ENCODE measurements at regions of chr7 and their contacts with region 1.

Region 1: DNA sequence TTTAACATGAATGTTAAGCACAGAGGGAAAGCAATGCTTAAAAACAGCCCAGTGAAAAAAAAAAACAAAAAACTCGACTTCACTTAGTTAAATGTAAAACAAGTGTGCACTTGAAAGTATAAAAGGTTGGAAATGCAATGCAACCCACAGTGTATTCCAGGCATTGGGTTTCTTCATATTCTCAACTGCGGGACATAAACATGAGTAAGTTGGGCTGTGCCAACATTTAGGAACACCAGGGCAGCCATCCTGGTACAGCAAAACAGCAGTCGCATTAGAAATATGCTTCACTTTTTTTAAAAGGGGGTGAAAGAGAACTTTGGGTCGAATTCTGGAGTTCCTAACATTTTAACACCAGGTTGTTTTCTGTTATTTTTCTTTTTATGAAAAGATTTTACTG is 937 bp downstream of the STEAP1 start:
- DNase-seq: no peak
- H3K4me3 ChIP-seq: peak overlapping the region in 2 of 3 experiments; percentile 5 to 66
- H3K27ac ChIP-seq: no peak overlapping the region
- H3K4me1 ChIP-seq: peaks cover 18% of the 10 kb centered on the region
- H3K27me3 ChIP-seq: no peaks in the 10 kb centered on the region
- CTCF ChIP-seq: no peak

Region 2: DNA sequence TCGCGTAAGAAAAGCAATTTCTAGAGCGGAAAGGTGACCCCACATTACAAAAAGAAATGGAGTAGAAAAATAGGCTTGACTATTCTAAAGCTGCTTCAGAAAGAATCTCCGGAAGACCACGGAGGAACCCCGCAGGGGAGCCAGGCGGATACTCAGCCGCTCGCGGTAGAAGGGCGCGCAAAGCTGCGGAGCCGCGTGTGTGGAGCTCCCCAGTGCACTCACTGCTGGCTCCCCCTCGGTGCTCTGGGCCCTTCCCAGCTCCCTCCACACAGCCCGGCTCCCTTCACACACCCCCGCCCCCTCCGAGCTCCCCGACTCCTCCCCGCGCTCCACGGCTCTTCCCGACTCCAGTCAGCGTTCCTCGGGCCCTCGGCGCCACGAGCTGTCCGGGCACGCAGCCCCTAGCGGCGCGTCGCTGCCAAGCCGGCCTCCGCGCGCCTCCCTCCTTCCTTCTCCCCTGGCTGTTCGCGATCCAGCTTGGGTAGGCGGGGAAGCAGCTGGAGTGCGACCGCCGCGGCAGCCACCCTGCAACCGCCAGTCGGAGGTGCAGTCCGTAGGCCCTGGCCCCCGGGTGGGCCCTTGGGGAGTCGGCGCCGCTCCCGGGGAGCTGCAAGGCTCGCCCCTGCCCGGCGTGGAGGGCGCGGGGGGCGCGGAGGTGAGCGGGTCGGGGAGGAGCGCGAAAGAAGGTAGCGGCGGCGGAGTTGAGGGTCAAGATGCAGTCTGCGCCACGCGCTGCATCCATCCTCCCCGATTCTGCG is 56.4 kb after region 1 on chr7 and contains the start of gene STEAP2:
- CTCF ChIA-PET with region 1: interaction called, 16 read pairs
- dilution Hi-C with region 1: no loop called
- in situ Hi-C with region 1: no loop called
- intact Hi-C with region 1: loop called (anchors 1 kb)
- DNase-seq: peak; percentile 88
- H3K4me3 ChIP-seq: peak within 1 kb of the TSS; percentile 55 to 77 (median 75)
- H3K27ac ChIP-seq: peak within 1 kb of the TSS; percentile 51
- H3K4me1 ChIP-seq: peaks cover 13% of the 10 kb centered on the region
- H3K27me3 ChIP-seq: no peaks in the 10 kb centered on the region
- CTCF ChIP-seq: peak; percentile 26 to 74
- total RNA-seq, gene STEAP2: 9.2 to 10.9 TPM

Region 3: GRCh38 chr7:90244909-90245851 is 90.0 kb after region 1 on chr7 and contains the start of gene CFAP69:
- CTCF ChIA-PET with region 1: no interaction called
- dilution Hi-C with region 1: no loop called
- in situ Hi-C with region 1: loop called in 1 of 2 experiments (anchors 25 kb)
- intact Hi-C with region 1: loop called (anchors 1 kb)
- DNase-seq: peak; percentile 81
- H3K4me3 ChIP-seq: peak within 1 kb of the TSS; percentile 79 to 95 (median 83)
- H3K27ac ChIP-seq: peak within 1 kb of the TSS; percentile 69
- H3K4me1 ChIP-seq: peaks cover 16% of the 10 kb centered on the region
- H3K27me3 ChIP-seq: no peaks in the 10 kb centered on the region
- CTCF ChIP-seq: peak in 1 of 2 donors; percentile 53
- total RNA-seq, gene CFAP69: 1.7 to 5.0 TPM

Region 4: DNA sequence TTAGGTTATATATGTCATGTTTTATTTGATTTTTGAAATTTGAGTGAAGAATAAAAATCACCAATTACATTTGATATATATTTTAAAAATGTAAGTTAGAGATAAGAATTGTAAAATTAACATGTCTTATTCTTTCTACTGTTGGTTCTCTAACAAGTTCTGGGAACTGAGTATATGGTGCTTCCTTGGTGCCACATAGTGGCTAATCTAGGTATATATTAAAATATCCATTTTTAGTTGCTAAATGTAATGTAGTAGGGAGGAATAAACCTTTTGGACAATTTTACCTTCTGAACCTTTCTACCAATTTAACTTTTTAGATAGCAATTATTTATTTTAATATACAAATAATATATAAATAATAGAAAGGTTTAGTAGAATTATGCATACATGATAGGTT is 107.2 kb after region 1 on chr7:
- CTCF ChIA-PET with region 1: no interaction called
- dilution Hi-C with region 1: no loop called
- in situ Hi-C with region 1: loop called (anchors 5 to 25 kb)
- intact Hi-C with region 1: loop called (anchors 1 kb)
- DNase-seq: peak; percentile 21
- H3K4me3 ChIP-seq: no peak overlapping the region
- H3K27ac ChIP-seq: no peak overlapping the region
- H3K4me1 ChIP-seq: no peaks in the 10 kb centered on the region
- H3K27me3 ChIP-seq: no peaks in the 10 kb centered on the region
- CTCF ChIP-seq: peak; percentile 32 to 54

Region 5: DNA sequence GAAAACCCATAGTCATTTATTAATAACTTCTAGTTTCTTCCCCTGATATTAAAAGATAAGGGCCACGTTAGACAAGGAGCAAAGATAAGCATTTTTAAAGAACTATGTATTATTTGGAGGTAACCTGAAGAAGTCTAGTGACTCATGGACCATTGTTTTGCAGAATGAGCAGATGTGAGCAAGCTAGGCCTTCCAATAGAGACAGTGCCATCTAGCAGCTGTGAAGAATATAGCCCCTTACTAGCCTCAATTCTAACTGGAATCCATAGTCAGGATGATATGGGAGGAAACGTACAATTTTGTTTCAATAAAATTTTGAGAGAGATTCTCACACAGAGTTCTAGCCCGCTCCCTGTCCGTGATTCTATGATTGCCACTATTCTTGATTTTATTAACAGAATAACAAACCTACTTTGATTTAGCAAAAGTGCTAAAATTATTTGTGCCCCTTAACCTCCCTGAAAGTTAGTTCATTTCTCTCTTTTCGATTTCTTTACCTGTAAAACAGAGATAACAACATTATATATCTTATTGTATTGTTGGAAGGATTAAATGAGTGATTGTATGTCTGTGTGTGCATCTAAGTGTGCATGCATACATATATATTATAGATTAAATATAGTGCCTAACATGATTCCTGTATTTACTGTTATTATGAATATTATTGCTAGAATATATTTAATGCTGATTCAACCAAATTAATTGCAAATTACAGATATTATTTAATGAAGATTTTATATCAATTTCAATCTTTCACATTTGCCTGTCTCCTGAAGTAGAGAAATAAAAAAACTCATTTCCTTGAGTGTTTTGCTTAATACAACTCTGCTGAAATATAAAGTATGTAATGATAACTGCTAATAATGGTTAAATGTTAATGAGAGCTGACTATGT is 143.2 kb after region 1 on chr7:
- CTCF ChIA-PET with region 1: no interaction called
- dilution Hi-C with region 1: no loop called
- in situ Hi-C with region 1: no loop called
- intact Hi-C with region 1: loop called (anchors 1 kb)
- DNase-seq: peak; percentile 61
- H3K4me3 ChIP-seq: no peak overlapping the region
- H3K27ac ChIP-seq: no peak overlapping the region
- H3K4me1 ChIP-seq: no peaks in the 10 kb centered on the region
- H3K27me3 ChIP-seq: no peaks in the 10 kb centered on the region
- CTCF ChIP-seq: peak; percentile 71 to 81

Region 6: DNA sequence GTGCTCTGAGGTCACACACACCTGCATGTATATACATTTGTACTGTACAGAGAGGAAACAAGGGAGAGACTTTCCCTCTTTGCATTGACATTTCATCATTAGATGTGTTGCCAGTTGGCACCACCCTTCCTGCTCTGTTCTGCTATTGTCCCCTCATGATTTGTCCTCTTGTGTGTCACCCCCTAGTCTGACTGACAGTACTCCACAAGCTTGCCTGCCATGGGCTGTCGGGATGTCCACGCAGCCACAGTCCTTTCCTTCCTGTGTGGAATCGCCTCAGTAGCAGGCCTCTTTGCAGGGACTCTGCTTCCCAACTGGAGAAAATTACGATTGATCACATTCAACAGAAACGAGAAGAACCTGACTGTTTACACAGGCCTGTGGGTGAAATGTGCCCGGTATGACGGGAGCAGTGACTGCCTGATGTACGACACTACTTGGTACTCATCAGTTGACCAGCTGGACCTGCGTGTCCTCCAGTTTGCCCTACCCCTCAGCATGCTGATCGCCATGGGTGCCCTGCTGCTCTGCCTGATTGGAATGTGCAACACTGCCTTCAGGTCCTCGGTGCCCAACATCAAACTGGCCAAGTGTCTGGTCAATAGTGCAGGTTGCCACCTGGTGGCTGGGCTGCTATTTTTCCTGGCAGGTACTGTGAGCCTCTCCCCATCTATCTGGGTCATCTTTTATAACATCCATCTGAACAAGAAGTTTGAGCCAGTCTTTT is 257.4 kb after region 1 on chr7:
- CTCF ChIA-PET with region 1: no interaction called
- dilution Hi-C with region 1: no loop called
- in situ Hi-C with region 1: loop called (anchors 10 to 25 kb)
- intact Hi-C with region 1: loop called (anchors 5 kb)
- DNase-seq: peak; percentile 30
- H3K4me3 ChIP-seq: no peak overlapping the region
- H3K27ac ChIP-seq: no peak overlapping the region
- H3K4me1 ChIP-seq: peaks cover 2% of the 10 kb centered on the region
- H3K27me3 ChIP-seq: no peaks in the 10 kb centered on the region
- CTCF ChIP-seq: peak; percentile 44 to 59

Region 7: GRCh38 chr7:90424720-90425119 is 269.5 kb after region 1 on chr7:
- CTCF ChIA-PET with region 1: no interaction called
- dilution Hi-C with region 1: no loop called
- in situ Hi-C with region 1: loop called (anchors 10 to 25 kb)
- intact Hi-C with region 1: loop called (anchors 1 kb)
- DNase-seq: no peak
- H3K4me3 ChIP-seq: no peak overlapping the region
- H3K27ac ChIP-seq: no peak overlapping the region
- H3K4me1 ChIP-seq: peaks cover 9% of the 10 kb centered on the region
- H3K27me3 ChIP-seq: no peaks in the 10 kb centered on the region
- CTCF ChIP-seq: no peak